ENCODE measurements at regions of chr17 and their contacts with region 1.

Region 1: GRCh38 chr17:33389504-33390135 is 96.5 kb upstream of the ASIC2 start:
- DNase-seq: no peak
- ATAC-seq: no peak
- H3K4me3 Mint-ChIP-seq: no peak overlapping the region
- H3K27ac Mint-ChIP-seq: no peak overlapping the region
- H3K4me1 Mint-ChIP-seq: no peaks in the 10 kb centered on the region
- H3K27me3 Mint-ChIP-seq: peaks cover 9% of the 10 kb centered on the region

Region 2: DNA sequence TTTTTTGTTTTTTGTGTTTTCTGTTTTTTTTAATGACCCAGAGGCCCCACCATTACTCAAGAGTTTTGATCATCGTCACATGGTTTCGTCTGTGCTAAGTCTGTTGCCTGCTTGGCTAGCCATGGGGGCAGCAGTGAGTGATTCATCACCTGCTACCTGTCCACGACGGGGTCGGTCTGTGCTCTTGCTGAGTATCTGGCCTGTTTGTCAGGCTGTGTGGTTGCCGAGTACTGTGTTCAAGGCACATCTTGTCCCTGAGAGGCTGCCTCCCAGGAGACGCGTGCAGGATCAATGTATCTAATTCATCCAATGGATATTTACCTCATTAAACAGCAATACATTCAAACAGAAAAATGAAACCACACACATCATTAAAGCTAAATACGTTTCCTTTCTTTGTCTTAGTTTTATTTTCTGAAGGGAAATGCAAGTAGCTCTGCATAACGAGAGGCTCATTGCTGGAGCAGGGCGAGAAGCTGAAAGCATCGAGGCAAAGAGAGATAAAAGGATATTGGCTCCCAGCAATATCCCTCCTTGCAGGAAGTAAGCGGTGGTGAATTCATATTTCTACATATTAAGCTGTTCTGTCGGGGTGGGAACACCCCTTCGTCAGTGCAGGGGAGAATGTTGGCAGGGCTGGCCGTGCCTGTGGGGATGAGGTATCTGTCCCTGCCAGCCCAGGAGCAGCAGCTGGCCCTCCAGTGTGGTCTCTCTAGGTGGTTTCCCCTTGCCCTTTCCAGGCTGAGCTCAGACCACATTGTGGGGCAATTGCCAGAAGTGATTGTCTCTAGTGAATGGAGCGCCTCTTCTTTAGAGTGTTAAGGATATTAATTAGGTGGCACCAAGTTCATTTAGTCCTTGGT is 69.7 kb after region 1 on chr17:
- CTCF ChIA-PET with region 1: no interaction called
- POLR2A ChIA-PET with region 1: no interaction called
- intact Hi-C with region 1: loop called in 1 of 2 experiments (anchors 10 kb)
- DNase-seq: no peak
- ATAC-seq: no peak
- H3K4me3 Mint-ChIP-seq: no peak overlapping the region
- H3K27ac Mint-ChIP-seq: no peak overlapping the region
- H3K4me1 Mint-ChIP-seq: no peaks in the 10 kb centered on the region
- H3K27me3 Mint-ChIP-seq: peaks cover 14% of the 10 kb centered on the region

Region 3: DNA sequence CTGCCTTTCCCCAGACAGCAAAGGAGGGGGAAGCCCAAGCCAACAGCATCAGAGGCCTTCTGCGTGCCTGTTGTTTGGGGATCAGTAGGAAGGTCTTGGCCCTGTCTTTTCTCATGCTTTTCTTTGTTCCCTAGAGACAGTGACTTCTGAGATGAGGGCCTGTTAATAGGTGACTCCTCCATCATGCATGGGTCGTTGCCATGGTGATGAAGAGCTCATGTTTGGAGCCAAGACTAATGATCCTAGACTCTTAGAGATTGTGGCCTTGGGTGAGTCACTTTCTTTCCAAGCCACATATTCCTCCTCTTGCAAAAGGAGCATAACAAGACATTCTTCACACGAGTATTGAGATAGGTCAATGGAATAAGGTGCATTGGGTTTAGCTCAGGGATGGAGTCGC is 104.5 kb after region 1 on chr17:
- CTCF ChIA-PET with region 1: no interaction called
- POLR2A ChIA-PET with region 1: no interaction called
- intact Hi-C with region 1: no loop called
- DNase-seq: no peak
- ATAC-seq: no peak
- H3K4me3 Mint-ChIP-seq: no peak overlapping the region
- H3K27ac Mint-ChIP-seq: no peak overlapping the region
- H3K4me1 Mint-ChIP-seq: no peaks in the 10 kb centered on the region
- H3K27me3 Mint-ChIP-seq: peaks cover 5% of the 10 kb centered on the region